ENCODE measurements at regions of chr15 and their contacts with region 1.

Region 1: DNA sequence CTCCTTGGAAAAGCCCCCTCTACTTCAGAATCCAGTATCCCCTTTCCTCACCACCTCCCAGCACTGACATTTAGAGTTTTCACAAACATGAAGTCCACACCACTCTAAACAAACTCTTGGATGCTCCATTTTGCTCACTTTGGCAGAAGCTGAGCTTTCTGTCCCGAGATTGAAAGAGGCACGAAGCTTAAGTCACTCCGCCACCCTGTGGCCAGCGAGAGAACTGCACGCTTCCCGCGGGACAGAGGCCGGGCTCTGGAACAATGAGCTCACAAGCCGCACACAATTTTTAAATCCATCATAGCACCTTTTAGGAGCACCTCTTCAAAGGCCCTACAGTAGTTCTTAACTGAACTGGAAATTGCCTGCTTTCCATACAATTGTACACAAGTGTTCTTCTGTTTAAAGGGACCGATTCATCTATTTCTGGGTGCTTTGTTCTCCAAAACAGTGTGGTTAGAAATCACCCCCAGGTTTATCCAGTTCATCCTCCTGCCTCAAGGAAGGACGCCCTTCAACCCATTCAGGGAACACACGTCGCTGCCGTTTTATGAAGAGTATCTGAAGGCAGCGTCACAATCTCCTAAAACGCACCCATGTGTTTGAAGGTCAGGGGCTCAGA is 226.1 kb downstream of the VPS13C start:
- DNase-seq: peak; percentile 21 to 74 (median 56)
- ATAC-seq: peak; percentile 85
- H3K4me3 ChIP-seq: no peak overlapping the region
- H3K4me3 Mint-ChIP-seq: peak overlapping the region in 2 of 10 donors; percentile 1 to 11
- H3K27ac ChIP-seq: no peak overlapping the region
- H3K27ac Mint-ChIP-seq: no peak overlapping the region
- H3K4me1 ChIP-seq: no peaks in the 10 kb centered on the region
- H3K4me1 Mint-ChIP-seq: peaks cover 0 to 6% (median 4%) of the 10 kb centered on the region in 7 donors
- H3K27me3 ChIP-seq: no peaks in the 10 kb centered on the region
- H3K27me3 Mint-ChIP-seq: peaks cover 19 to 28% (median 28%) of the 10 kb centered on the region in 5 donors

Region 2: GRCh38 chr15:61169904-61170695 is 664.1 kb before region 1 on chr15:
- CTCF ChIA-PET with region 1: no interaction called
- POLR2A ChIA-PET with region 1: no interaction called
- intact Hi-C with region 1: loop called in 1 of 2 experiments (anchors 1 kb)
- DNase-seq: peak in 1 of 9 donors; percentile 24
- ATAC-seq: no peak
- H3K4me3 ChIP-seq: no peak overlapping the region
- H3K4me3 Mint-ChIP-seq: peak overlapping the region; percentile 3 to 59 (median 44)
- H3K27ac ChIP-seq: no peak overlapping the region
- H3K27ac Mint-ChIP-seq: peak overlapping the region in 5 of 9 donors; percentile 26 to 91 (median 86)
- H3K4me1 ChIP-seq: peaks cover 10 to 15% of the 10 kb centered on the region in 2 donors
- H3K4me1 Mint-ChIP-seq: peaks cover 10 to 36% (median 19%) of the 10 kb centered on the region in 7 donors
- H3K27me3 ChIP-seq: no peaks in the 10 kb centered on the region
- H3K27me3 Mint-ChIP-seq: peaks cover 11 to 20% (median 14%) of the 10 kb centered on the region in 5 donors

Measured in naive thymus-derived CD4-positive, alpha-beta T cell (primary cell).